Vagina (tissue), 2 donors: ENCODE measurements at regions of chr1 and their contacts with region 1.

Region 1: GRCh38 chr1:66242646-66243547 is 291.1 kb upstream of the SGIP1 start:
- DNase-seq: no peak
- H3K4me3 ChIP-seq: no peak overlapping the region
- H3K27ac ChIP-seq: peak overlapping the region; percentile 1
- H3K4me1 ChIP-seq: no peaks in the 10 kb centered on the region
- H3K27me3 ChIP-seq: no peaks in the 10 kb centered on the region
- CTCF ChIP-seq: peak; percentile 97 to 99 (median 99)
- POLR2A ChIP-seq: no peak

Region 2: DNA sequence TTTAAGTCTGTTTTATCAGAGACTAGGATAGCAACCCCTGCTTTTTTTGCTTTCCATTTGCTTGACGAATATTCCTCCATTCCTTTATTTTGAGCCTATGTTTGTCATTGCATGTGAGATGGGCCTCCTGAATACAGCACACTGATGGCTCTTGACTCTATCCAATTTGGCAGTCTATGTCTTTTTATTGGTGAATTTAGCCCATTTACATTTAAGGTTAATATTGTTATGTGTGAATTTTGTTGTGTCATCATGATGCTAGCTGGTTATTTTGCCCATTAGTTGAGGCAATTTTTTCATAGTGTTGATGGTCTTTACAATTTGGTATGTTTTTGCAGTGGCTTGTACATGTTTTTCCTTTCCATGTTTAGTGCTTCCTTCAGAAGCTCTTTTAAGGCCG is 500.9 kb before region 1 on chr1:
- intact Hi-C with region 1: no loop called
- DNase-seq: no peak
- H3K4me3 ChIP-seq: no peak overlapping the region
- H3K27ac ChIP-seq: no peak overlapping the region
- H3K4me1 ChIP-seq: no peaks in the 10 kb centered on the region
- H3K27me3 ChIP-seq: no peaks in the 10 kb centered on the region
- CTCF ChIP-seq: no peak
- POLR2A ChIP-seq: no peak

Region 3: GRCh38 chr1:65958561-65959350 is 284.1 kb before region 1 on chr1:
- intact Hi-C with region 1: loop called (anchors 2 kb)
- DNase-seq: no peak
- H3K4me3 ChIP-seq: no peak overlapping the region
- H3K27ac ChIP-seq: no peak overlapping the region
- H3K4me1 ChIP-seq: no peaks in the 10 kb centered on the region
- H3K27me3 ChIP-seq: no peaks in the 10 kb centered on the region
- CTCF ChIP-seq: peak; percentile 65 to 94 (median 83)
- POLR2A ChIP-seq: no peak

Region 4: DNA sequence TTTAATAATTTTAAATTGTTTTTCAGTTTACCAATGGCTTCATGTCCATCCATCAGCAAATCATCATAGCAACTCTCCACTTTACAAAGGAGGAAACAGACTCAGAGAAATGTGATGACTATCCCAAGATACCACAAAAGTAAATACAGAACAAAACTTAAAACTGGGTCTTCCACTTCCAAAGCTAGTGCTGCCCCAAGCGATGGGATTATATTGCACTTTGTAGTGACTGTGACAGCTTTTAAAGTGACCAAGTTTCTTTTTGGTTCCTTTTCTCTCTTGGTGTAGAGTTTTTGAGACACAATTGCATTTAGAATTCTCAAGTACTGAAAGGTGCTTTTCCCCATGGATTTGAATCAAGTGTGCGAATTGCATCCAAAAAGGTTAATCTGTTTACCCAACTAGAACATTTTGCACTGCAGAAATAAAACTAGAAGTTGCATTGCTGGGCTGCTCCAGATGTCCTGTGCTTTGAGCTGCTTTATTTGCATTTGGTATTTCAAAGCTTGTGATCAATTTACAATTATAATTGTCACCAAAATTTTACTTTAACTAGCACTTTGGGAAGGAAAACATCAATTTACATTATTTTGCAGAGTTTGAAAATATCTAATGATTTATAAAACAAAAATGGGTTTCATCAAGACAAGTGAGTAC is 130.0 kb before region 1 on chr1:
- intact Hi-C with region 1: no loop called
- DNase-seq: no peak
- H3K4me3 ChIP-seq: no peak overlapping the region
- H3K27ac ChIP-seq: no peak overlapping the region
- H3K4me1 ChIP-seq: no peaks in the 10 kb centered on the region
- H3K27me3 ChIP-seq: no peaks in the 10 kb centered on the region
- CTCF ChIP-seq: no peak
- POLR2A ChIP-seq: no peak

Region 5: DNA sequence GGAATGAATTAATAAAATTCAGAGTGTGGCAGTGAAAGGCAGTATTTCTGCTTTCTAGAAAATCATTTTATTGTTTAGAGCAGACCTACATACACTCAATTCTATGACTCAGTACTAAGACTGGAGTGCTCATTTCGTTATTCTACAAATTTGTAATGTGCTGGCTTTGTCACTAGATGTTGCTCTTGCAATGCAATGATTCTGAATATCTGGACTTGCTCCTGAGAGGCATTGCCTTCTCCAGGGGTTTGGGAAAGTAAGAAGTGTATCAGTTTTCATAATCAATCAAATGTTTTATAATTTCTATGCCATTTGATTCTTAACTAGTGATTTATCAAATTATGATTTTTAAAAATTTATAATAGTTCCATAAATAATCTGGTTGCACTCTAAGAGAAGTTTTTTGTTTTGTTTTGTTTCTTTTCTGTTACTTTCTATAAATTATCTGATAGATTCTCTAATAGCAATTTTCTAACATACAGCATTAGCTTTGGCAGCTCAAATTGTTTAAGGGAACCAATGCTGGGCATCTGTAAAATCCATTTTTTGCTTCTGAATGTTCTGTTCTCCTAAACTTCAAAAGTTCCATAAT is 10.5 kb after region 1 on chr1:
- intact Hi-C with region 1: no loop called
- DNase-seq: no peak
- H3K4me3 ChIP-seq: no peak overlapping the region
- H3K27ac ChIP-seq: no peak overlapping the region
- H3K4me1 ChIP-seq: peaks cover 9% of the 10 kb centered on the region
- H3K27me3 ChIP-seq: no peaks in the 10 kb centered on the region
- CTCF ChIP-seq: peak; percentile 40 to 81 (median 58)
- POLR2A ChIP-seq: no peak

Region 6: DNA sequence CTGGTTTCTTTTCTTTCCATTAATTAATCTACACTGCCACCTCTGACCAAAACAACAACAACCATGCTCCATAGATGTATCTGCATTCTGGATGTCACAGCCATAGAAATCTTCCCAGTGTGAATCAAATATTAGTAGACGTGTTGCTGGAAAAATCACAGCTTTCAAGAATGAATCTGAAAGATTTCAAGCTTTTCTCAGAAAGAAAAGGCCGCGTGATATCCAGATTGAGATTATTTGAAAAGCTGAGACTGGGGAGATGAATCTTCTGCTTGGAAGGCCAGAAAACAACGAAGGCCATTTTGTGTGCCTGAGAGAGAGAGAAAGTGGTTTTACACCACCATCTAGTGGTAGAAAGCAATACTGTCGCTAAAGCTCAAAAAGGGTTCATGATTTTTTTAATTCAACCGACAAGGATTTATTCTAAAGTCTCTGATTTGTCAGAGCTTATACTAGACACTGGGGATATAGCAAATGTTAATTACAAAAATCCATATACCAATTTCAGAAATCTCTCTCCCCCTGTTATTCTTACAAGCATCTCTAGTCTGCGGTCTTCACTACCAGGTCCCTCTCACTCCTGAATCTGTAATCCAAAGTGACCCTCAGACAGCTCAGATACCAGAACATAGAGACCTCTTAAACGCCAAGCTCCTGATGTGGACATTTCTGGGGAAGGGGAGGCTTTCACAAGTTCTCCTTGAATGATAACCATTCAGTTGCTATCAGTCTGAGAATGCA is 203.5 kb after region 1 on chr1:
- intact Hi-C with region 1: loop called (anchors 5 kb)
- DNase-seq: no peak
- H3K4me3 ChIP-seq: no peak overlapping the region
- H3K27ac ChIP-seq: no peak overlapping the region
- H3K4me1 ChIP-seq: peaks cover 9% of the 10 kb centered on the region
- H3K27me3 ChIP-seq: no peaks in the 10 kb centered on the region
- CTCF ChIP-seq: peak; percentile 63 to 87 (median 81)
- POLR2A ChIP-seq: no peak

Region 7: GRCh38 chr1:66521721-66522365 is 278.9 kb after region 1 on chr1:
- intact Hi-C with region 1: no loop called
- DNase-seq: no peak
- H3K4me3 ChIP-seq: no peak overlapping the region
- H3K27ac ChIP-seq: no peak overlapping the region
- H3K4me1 ChIP-seq: no peaks in the 10 kb centered on the region
- H3K27me3 ChIP-seq: no peaks in the 10 kb centered on the region
- CTCF ChIP-seq: no peak
- POLR2A ChIP-seq: no peak